ENCODE measurements at regions of chr15 and their contacts with region 1.

Region 1: GRCh38 chr15:32870240-32871033 is 152.6 kb downstream of the GREM1 start:
- DNase-seq: peak; percentile 100
- ATAC-seq: peak; percentile 55
- H3K4me3 ChIP-seq: no peak overlapping the region
- H3K27ac ChIP-seq: peak overlapping the region; percentile 100
- H3K4me1 ChIP-seq: peaks cover 38% of the 10 kb centered on the region
- H3K27me3 ChIP-seq: no peaks in the 10 kb centered on the region
- CTCF ChIP-seq: no peak
- POLR2A ChIP-seq: no peak; the same call in 1 of the 2 replicates
- RAD21 ChIP-seq: peak; percentile 47

Region 2: GRCh38 chr15:32717426-32718226 is 152.8 kb before region 1 on chr15 and contains the start of gene GREM1:
- CTCF ChIA-PET with region 1: no interaction called
- POLR2A ChIA-PET with region 1: interaction called, 8 read pairs
- dilution Hi-C with region 1: no loop called
- in situ Hi-C with region 1: no loop called
- intact Hi-C with region 1: loop called (anchors 5 kb)
- DNase-seq: peak; percentile 70
- ATAC-seq: peak; percentile 72
- H3K4me3 ChIP-seq: peak within 1 kb of the TSS; percentile 84
- H3K27ac ChIP-seq: peak within 1 kb of the TSS; percentile 94
- H3K4me1 ChIP-seq: peaks cover 5% of the 10 kb centered on the region
- H3K27me3 ChIP-seq: no peaks in the 10 kb centered on the region
- CTCF ChIP-seq: no peak
- POLR2A ChIP-seq: peak; percentile 98
- RAD21 ChIP-seq: no peak
- total RNA-seq, gene GREM1: 848 and 1,032 TPM in 2 replicates

Region 3: GRCh38 chr15:32818758-32819447 is 51.5 kb before region 1 on chr15:
- CTCF ChIA-PET with region 1: no interaction called
- POLR2A ChIA-PET with region 1: no interaction called
- dilution Hi-C with region 1: no loop called
- in situ Hi-C with region 1: no loop called
- intact Hi-C with region 1: no loop called
- DNase-seq: peak; percentile 86
- ATAC-seq: peak; percentile 69
- H3K4me3 ChIP-seq: no peak overlapping the region
- H3K27ac ChIP-seq: peak overlapping the region; percentile 38; the same call in 1 of the 2 replicates
- H3K4me1 ChIP-seq: peaks cover 4% of the 10 kb centered on the region; the same call in 1 of the 2 replicates
- H3K27me3 ChIP-seq: no peaks in the 10 kb centered on the region
- CTCF ChIP-seq: no peak
- POLR2A ChIP-seq: no peak
- RAD21 ChIP-seq: no peak

Region 4: DNA sequence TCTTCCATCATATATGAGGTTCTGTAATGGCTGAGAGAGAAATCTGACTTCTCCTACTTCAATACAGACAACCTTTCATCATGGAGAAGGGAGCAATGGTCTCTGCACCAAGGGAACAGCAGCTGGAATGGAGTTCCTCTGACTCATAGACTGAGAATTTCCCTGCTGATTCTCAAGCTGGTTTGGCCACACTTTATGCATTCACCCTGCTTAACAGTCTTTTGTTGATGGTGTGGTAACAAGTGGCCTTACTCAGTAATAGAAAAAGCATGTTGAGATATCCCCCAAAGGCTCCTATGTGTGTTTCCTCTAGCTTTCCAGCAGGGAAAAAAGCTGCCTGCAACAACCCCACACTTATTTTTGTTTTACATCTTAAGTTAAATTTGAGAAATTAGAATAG is 14.5 kb before region 1 on chr15:
- CTCF ChIA-PET with region 1: interaction called, 3 read pairs
- POLR2A ChIA-PET with region 1: interaction called, 4 read pairs
- dilution Hi-C with region 1: no loop called
- in situ Hi-C with region 1: no loop called
- intact Hi-C with region 1: loop called (anchors 1 kb)
- DNase-seq: peak; percentile 100
- ATAC-seq: peak; percentile 83
- H3K4me3 ChIP-seq: no peak overlapping the region
- H3K27ac ChIP-seq: peak overlapping the region; percentile 5; the same call in 1 of the 2 replicates
- H3K4me1 ChIP-seq: peaks cover 27% of the 10 kb centered on the region
- H3K27me3 ChIP-seq: no peaks in the 10 kb centered on the region
- CTCF ChIP-seq: peak; percentile 34; the same call in 1 of the 2 replicates
- POLR2A ChIP-seq: no peak; the same call in 1 of the 2 replicates
- RAD21 ChIP-seq: peak; percentile 40

Region 5: GRCh38 chr15:32919749-32920414 is 49.4 kb after region 1 on chr15:
- CTCF ChIA-PET with region 1: no interaction called
- POLR2A ChIA-PET with region 1: interaction called, 3 read pairs
- dilution Hi-C with region 1: no loop called
- in situ Hi-C with region 1: no loop called
- intact Hi-C with region 1: loop called (anchors 1 kb)
- DNase-seq: peak; percentile 99
- ATAC-seq: peak; percentile 88
- H3K4me3 ChIP-seq: no peak overlapping the region
- H3K27ac ChIP-seq: peak overlapping the region; percentile 90
- H3K4me1 ChIP-seq: peaks cover 32% of the 10 kb centered on the region
- H3K27me3 ChIP-seq: no peaks in the 10 kb centered on the region
- CTCF ChIP-seq: no peak
- POLR2A ChIP-seq: peak; percentile 45; the same call in 1 of the 2 replicates
- RAD21 ChIP-seq: no peak; the same call in 1 of the 2 replicates

Region 6: GRCh38 chr15:32956006-32956405 is 85.6 kb after region 1 on chr15:
- CTCF ChIA-PET with region 1: interaction called, 6 read pairs
- POLR2A ChIA-PET with region 1: no interaction called
- dilution Hi-C with region 1: no loop called
- in situ Hi-C with region 1: no loop called
- intact Hi-C with region 1: loop called (anchors 1 kb)
- DNase-seq: peak; percentile 95
- ATAC-seq: peak; percentile 73
- H3K4me3 ChIP-seq: no peak overlapping the region
- H3K27ac ChIP-seq: peak overlapping the region; percentile 92; the same call in 1 of the 2 replicates
- H3K4me1 ChIP-seq: peaks cover 37% of the 10 kb centered on the region
- H3K27me3 ChIP-seq: no peaks in the 10 kb centered on the region
- CTCF ChIP-seq: peak; percentile 79
- POLR2A ChIP-seq: no peak
- RAD21 ChIP-seq: peak; percentile 79

Region 7: GRCh38 chr15:32987067-32987466 is 116.6 kb after region 1 on chr15:
- CTCF ChIA-PET with region 1: no interaction called
- POLR2A ChIA-PET with region 1: no interaction called
- dilution Hi-C with region 1: no loop called
- in situ Hi-C with region 1: no loop called
- intact Hi-C with region 1: loop called (anchors 2 kb)
- DNase-seq: no peak
- ATAC-seq: no peak
- H3K4me3 ChIP-seq: no peak overlapping the region
- H3K27ac ChIP-seq: peak overlapping the region; percentile 86
- H3K4me1 ChIP-seq: peaks cover 14% of the 10 kb centered on the region
- H3K27me3 ChIP-seq: no peaks in the 10 kb centered on the region
- CTCF ChIP-seq: no peak
- POLR2A ChIP-seq: no peak
- RAD21 ChIP-seq: no peak

Region 8: GRCh38 chr15:33188641-33189257 is 318.3 kb after region 1 on chr15:
- CTCF ChIA-PET with region 1: no interaction called
- POLR2A ChIA-PET with region 1: no interaction called
- dilution Hi-C with region 1: no loop called
- in situ Hi-C with region 1: no loop called
- intact Hi-C with region 1: no loop called
- DNase-seq: no peak
- ATAC-seq: no peak
- H3K4me3 ChIP-seq: no peak overlapping the region
- H3K27ac ChIP-seq: no peak overlapping the region
- H3K4me1 ChIP-seq: no peaks in the 10 kb centered on the region
- H3K27me3 ChIP-seq: peaks cover 26% of the 10 kb centered on the region
- CTCF ChIP-seq: no peak
- POLR2A ChIP-seq: no peak
- RAD21 ChIP-seq: no peak

Region 9: GRCh38 chr15:33293622-33294305 is 423.3 kb after region 1 on chr15:
- CTCF ChIA-PET with region 1: no interaction called
- POLR2A ChIA-PET with region 1: no interaction called
- dilution Hi-C with region 1: no loop called
- in situ Hi-C with region 1: no loop called
- intact Hi-C with region 1: no loop called
- DNase-seq: no peak
- ATAC-seq: no peak
- H3K4me3 ChIP-seq: no peak overlapping the region
- H3K27ac ChIP-seq: no peak overlapping the region
- H3K4me1 ChIP-seq: no peaks in the 10 kb centered on the region
- H3K27me3 ChIP-seq: peaks cover 17% of the 10 kb centered on the region
- CTCF ChIP-seq: no peak
- POLR2A ChIP-seq: no peak
- RAD21 ChIP-seq: no peak

Region 10: DNA sequence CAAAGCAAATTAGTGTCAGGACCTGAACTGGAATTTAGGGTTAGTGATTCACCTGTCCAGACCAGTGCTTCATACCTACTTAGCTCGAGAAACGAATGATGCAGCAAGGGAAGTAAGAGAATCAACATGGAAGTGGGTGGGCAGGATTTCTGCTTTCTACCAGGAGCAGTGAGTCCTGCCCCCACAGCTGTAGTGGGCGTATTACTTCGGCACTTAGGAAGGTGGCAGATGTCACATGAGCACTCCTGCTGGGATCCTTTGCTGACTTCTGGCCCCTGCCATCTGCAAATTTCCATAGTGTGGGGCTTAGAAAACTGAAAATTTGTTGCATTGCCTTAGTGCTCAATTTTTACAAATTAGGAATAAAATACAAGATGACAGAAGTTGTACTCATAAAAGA is 471.5 kb after region 1 on chr15:
- CTCF ChIA-PET with region 1: no interaction called
- POLR2A ChIA-PET with region 1: no interaction called
- dilution Hi-C with region 1: no loop called
- in situ Hi-C with region 1: no loop called
- intact Hi-C with region 1: no loop called
- DNase-seq: no peak
- ATAC-seq: no peak
- H3K4me3 ChIP-seq: no peak overlapping the region
- H3K27ac ChIP-seq: no peak overlapping the region
- H3K4me1 ChIP-seq: no peaks in the 10 kb centered on the region
- H3K27me3 ChIP-seq: no peaks in the 10 kb centered on the region
- CTCF ChIP-seq: no peak
- POLR2A ChIP-seq: no peak
- RAD21 ChIP-seq: no peak

Measured in IMR-90 (cell line).